GM10248 (cell line): ENCODE measurements at regions of chr2 and their contacts with region 1.

Region 1: DNA sequence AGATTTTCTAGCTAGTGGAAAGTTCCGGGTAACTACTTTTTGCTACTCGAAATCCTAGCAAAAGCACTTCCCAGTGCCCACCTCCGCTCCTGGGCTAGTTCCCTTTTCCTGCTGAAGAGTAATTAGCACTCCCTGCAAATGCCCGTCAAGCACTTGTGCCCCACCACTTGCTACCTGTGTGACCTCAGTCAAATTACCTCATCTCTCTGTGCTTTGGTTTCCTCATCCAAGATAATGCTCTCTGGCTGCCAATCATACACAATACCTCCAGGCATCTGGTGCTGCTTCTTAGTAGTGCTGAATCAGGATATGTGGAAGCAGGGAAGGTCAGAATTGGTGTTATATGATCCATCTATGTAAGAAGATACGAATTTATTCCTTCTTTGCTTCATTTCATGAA is 102.1 kb upstream of the CDCA7 start:
- DNase-seq: no peak
- CTCF ChIP-seq: no peak

Region 2: GRCh38 chr2:173241643-173242042 is 10.9 kb before region 1 on chr2:
- CTCF ChIA-PET with region 1: interaction called, 10 read pairs
- POLR2A ChIA-PET with region 1: no interaction called
- DNase-seq: no peak
- CTCF ChIP-seq: no peak